HAP-1 (cell line): ENCODE measurements at regions of chr9 and their contacts with region 1.

Region 1: GRCh38 chr9:92242260-92243136 is 51.0 kb downstream of the IARS1 start:
- DNase-seq: no peak
- H3K4me3 ChIP-seq: no peak overlapping the region
- H3K4me1 ChIP-seq: no peaks in the 10 kb centered on the region
- H3K27me3 ChIP-seq: no peaks in the 10 kb centered on the region

Region 2: GRCh38 chr9:91690540-91691253 is 551.8 kb before region 1 on chr9:
- in situ Hi-C with region 1: no loop called
- DNase-seq: no peak
- H3K4me3 ChIP-seq: no peak overlapping the region
- H3K4me1 ChIP-seq: no peaks in the 10 kb centered on the region
- H3K27me3 ChIP-seq: no peaks in the 10 kb centered on the region

Region 3: GRCh38 chr9:92140074-92140753 is 102.3 kb before region 1 on chr9:
- in situ Hi-C with region 1: loop called (anchors 5 kb)
- DNase-seq: peak; percentile 60 to 88
- H3K4me3 ChIP-seq: no peak overlapping the region
- H3K4me1 ChIP-seq: no peaks in the 10 kb centered on the region
- H3K27me3 ChIP-seq: no peaks in the 10 kb centered on the region

Region 4: GRCh38 chr9:92276331-92277032 is 34.0 kb after region 1 on chr9:
- in situ Hi-C with region 1: loop called (anchors 5 kb)
- DNase-seq: no peak
- H3K4me3 ChIP-seq: no peak overlapping the region
- H3K4me1 ChIP-seq: no peaks in the 10 kb centered on the region
- H3K27me3 ChIP-seq: no peaks in the 10 kb centered on the region